ENCODE measurements at regions of chrX and their contacts with region 1.

Region 1: GRCh38 chrX:72276478-72276953 is 532 bp downstream of the RPS4X start:
- DNase-seq: no peak
- H3K4me3 Mint-ChIP-seq: peak overlapping the region; percentile 89
- H3K27ac Mint-ChIP-seq: peak overlapping the region; percentile 90
- H3K4me1 Mint-ChIP-seq: peaks cover 40% of the 10 kb centered on the region
- H3K27me3 Mint-ChIP-seq: peaks cover 7% of the 10 kb centered on the region

Region 2: GRCh38 chrX:72018277-72019112 is 258.0 kb before region 1 on chrX:
- intact Hi-C with region 1: loop called (anchors 5 kb)
- DNase-seq: peak; percentile 70
- H3K4me3 Mint-ChIP-seq: no peak overlapping the region
- H3K27ac Mint-ChIP-seq: no peak overlapping the region
- H3K4me1 Mint-ChIP-seq: peaks cover 15% of the 10 kb centered on the region
- H3K27me3 Mint-ChIP-seq: peaks cover 44% of the 10 kb centered on the region

Region 3: GRCh38 chrX:72142094-72142793 is 134.3 kb before region 1 on chrX:
- intact Hi-C with region 1: loop called (anchors 1 kb)
- DNase-seq: no peak
- H3K4me3 Mint-ChIP-seq: no peak overlapping the region
- H3K27ac Mint-ChIP-seq: no peak overlapping the region
- H3K4me1 Mint-ChIP-seq: peaks cover 33% of the 10 kb centered on the region
- H3K27me3 Mint-ChIP-seq: peaks cover 28% of the 10 kb centered on the region

Region 4: DNA sequence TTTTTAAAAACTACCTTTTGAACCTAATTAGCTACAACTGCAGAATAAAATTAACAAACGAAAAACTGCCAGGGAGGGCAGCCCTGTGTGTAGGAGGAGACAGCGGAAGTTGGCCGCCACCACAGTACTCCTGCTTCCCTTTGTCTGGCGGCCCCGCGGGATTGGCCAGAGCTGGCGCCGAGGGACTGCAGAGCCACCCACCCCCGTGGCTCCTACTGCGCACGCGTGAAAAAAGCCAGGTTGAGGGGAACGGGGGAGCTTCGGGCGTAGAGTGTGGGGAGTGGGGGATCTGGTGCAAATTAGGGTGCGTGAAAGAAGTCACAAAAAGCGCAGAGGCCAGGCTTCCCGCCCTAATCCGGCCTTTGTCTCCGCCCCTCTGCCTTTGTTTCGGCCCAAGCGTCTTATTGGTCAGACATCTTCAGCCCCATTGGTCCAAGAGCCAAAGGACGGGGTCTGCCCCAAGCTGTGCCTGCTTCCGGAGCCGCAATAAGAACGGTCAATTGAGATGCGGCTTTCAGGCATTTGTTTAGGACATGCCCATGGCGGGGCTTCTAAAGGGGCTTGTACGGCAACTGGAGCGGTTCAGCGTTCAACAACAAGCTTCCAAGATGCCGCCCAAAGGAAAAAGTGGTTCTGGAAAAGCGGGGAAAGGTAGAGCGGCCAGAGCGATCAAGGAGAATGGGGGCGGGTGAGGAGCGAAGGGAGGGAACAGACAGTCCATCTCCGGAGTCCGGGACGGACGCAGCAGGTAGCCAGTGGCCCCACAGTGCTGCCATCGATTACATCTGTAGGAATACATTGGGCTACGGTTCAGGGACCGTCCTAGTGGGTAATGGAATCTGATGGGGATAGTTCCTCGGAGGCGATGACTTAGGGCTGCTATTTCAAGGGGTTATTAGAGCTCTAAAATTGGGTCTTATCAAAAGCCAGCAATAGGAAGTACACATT is 95.1 kb before region 1 on chrX and contains the start of gene PIN4:
- intact Hi-C with region 1: loop called (anchors 1 kb)
- DNase-seq: peak; percentile 76
- H3K4me3 Mint-ChIP-seq: no peak within 1 kb of the TSS
- H3K27ac Mint-ChIP-seq: no peak within 1 kb of the TSS
- H3K4me1 Mint-ChIP-seq: peaks cover 16% of the 10 kb centered on the region
- H3K27me3 Mint-ChIP-seq: no peaks in the 10 kb centered on the region
- total RNA-seq, gene PIN4: 10.2 and 13.3 TPM in 2 replicates

Region 5: DNA sequence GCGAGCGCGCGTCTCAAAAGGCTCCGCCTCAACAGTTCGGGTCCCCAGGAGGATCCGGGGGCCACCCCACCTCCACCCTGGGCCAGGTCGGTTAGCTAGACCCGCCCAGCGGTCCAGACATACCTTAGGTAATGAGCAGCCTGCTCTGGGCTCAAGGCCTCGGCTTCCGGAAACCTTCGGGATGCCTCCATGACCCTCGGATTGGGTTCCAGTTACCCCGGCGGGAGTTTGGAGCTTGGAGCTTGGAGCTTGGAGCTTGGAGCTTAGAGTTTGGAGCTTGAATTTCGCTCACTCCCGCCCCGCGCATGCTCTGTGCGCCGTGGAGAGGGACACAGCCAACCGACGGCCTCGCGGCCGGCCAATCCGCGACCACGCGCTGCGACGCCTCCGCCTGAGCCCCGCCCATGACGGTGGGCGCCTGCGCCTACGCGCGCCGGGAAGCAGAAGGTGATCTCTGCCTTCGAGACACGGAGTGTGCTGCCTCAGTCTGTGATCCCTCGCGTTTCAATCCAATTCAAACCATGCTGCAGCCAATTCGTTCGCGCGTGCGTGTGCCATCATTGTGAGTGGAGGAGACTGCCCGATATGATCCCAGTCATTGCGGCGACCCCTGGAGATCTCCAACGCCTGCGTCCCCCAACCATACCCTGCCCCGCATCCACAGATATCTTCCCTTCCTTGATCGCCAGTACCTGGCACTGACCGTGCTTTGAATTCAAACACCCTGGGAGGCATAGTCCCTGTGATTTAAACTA is 37.6 kb before region 1 on chrX and contains the start of gene ERCC6L:
- intact Hi-C with region 1: loop called (anchors 2 kb)
- DNase-seq: peak; percentile 84
- H3K4me3 Mint-ChIP-seq: peak within 1 kb of the TSS; percentile 84
- H3K27ac Mint-ChIP-seq: peak within 1 kb of the TSS; percentile 67
- H3K4me1 Mint-ChIP-seq: peaks cover 9% of the 10 kb centered on the region
- H3K27me3 Mint-ChIP-seq: no peaks in the 10 kb centered on the region
- total RNA-seq, gene ERCC6L: 7.4 and 7.5 TPM in 2 replicates

Region 6: GRCh38 chrX:72349190-72349589 is 72.7 kb after region 1 on chrX:
- intact Hi-C with region 1: loop called (anchors 5 kb)
- DNase-seq: peak; percentile 0
- H3K4me3 Mint-ChIP-seq: peak overlapping the region; percentile 59
- H3K27ac Mint-ChIP-seq: peak overlapping the region; percentile 82
- H3K4me1 Mint-ChIP-seq: peaks cover 25% of the 10 kb centered on the region
- H3K27me3 Mint-ChIP-seq: no peaks in the 10 kb centered on the region

Region 7: GRCh38 chrX:72572248-72573157 is 296.0 kb after region 1 on chrX and contains the start of gene HDAC8:
- intact Hi-C with region 1: loop called (anchors 1 kb)
- DNase-seq: peak; percentile 26
- H3K4me3 Mint-ChIP-seq: peak within 1 kb of the TSS; percentile 98
- H3K27ac Mint-ChIP-seq: peak within 1 kb of the TSS; percentile 95
- H3K4me1 Mint-ChIP-seq: peaks cover 5% of the 10 kb centered on the region
- H3K27me3 Mint-ChIP-seq: peaks cover 2% of the 10 kb centered on the region
- total RNA-seq, gene HDAC8: 29.6 and 30.6 TPM in 2 replicates

Measured in activated T-helper 1 cell treated with anti-CD3 and anti-CD28 coated beads, Interleukin-12 subunit alpha, Interleukin-12 subunit beta, Interleukin-2, Interleukin-4 antibody, amounts not matched to agents 30 ng/mL and 10 ng/mL and 1 ng/mL, durations not matched to agents 14 hours and 24 hours and 36 hours (primary cell).